Activated CD4-positive, alpha-beta memory T cell treated with anti-CD3 and anti-CD28 coated beads, Interleukin-2, amount 10 ng/mL, durations not matched to agents 7 days and 5 days (primary cell): ENCODE measurements at regions of chr6 and their contacts with region 1.

Region 1: DNA sequence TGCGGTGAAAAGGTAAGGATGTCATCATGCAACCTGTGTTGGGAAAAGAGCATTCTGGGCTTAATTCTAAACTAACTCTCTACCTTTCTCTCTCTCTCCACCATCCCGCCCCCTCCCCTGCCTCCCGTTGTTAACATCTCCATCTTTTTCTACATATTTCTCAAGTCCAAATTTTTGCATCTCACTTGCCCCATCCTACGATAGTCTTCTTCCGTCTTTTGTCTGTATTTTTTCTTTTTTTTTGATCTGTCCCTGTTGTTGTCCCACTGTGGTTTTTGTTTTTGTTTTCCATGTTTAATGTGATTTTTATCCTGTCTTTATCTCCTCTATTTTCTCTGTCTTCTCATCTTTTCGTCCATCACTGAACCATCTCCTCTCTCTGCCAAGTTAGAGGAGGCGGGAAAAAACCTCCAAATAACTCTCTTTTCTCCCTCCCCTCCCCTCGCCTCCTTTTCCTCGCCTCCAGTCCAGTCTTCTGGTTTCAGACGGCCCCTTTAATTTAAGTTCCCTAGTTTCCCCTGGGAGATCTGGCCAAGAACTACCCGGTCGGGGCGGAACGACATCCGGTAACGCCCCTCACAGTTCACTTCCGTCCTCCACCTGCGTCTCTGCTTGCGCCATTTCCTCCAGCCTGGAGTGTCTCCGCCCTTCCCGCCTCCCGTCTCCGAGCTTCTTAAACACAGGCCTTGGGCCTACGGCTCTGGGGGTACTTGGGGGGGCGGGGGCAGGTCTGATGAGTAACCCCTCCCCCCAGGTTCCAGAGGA is at the start of gene NFKBIL1:
- DNase-seq: peak; percentile 93
- H3K4me3 Mint-ChIP-seq: peak within 1 kb of the TSS; percentile 76
- H3K27ac Mint-ChIP-seq: peak within 1 kb of the TSS; percentile 69
- H3K4me1 Mint-ChIP-seq: peaks cover 62% of the 10 kb centered on the region
- H3K27me3 Mint-ChIP-seq: no peaks in the 10 kb centered on the region
- total RNA-seq, gene NFKBIL1: 22.8 to 23.6 TPM

Region 2: DNA sequence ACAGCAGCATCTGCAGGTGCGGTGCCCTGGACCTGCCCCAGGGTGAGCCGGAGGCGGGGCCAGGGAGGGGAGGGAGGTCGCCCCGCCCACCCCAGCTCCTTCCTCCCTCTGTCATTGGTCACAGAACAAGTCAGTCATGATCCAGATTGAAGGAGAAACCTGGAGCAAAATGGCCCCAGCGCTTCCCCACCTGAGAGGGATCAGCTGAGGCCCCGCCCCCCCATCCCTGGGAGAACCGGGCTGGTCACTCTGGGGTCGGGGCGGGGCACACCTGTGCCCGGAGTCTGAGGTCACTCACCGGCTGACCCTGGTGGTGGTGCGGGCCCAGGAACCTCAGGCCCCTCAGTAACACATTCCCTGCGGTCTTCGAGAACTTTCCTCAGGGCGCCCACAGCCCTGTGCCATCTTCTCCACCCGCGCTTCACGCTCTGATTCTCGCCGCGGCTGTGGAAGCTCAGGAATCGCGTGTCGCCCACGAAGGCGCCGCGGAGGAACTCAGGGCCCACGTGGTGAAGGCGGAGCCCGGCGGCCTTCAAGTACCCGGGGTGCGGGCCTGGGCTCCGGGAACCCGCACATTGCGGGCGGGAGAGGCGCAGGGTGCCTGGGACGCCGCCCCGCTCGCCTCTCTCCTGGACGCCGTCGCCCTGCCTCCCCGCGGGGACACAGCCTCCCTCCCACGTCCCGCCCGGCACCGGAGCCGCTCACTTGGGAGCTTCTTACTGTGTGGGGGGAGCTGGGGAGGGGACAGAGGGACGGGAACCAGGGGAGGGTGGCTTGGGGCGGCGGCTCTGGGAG is 238.9 kb before region 1 on chr6:
- CTCF ChIA-PET with region 1: no interaction called
- POLR2A ChIA-PET with region 1: no interaction called
- DNase-seq: peak; percentile 45
- H3K4me3 Mint-ChIP-seq: peak overlapping the region; percentile 68
- H3K27ac Mint-ChIP-seq: no peak overlapping the region
- H3K4me1 Mint-ChIP-seq: peaks cover 2% of the 10 kb centered on the region
- H3K27me3 Mint-ChIP-seq: peaks cover 29% of the 10 kb centered on the region

Region 3: GRCh38 chr6:31559958-31560696 is 13.0 kb after region 1 on chr6:
- CTCF ChIA-PET with region 1: interaction called, 5 read pairs
- POLR2A ChIA-PET with region 1: interaction called, 20 read pairs
- DNase-seq: peak; percentile 67
- H3K4me3 Mint-ChIP-seq: peak overlapping the region; percentile 66
- H3K27ac Mint-ChIP-seq: peak overlapping the region; percentile 61
- H3K4me1 Mint-ChIP-seq: peaks cover 69% of the 10 kb centered on the region
- H3K27me3 Mint-ChIP-seq: peaks cover 30% of the 10 kb centered on the region

Region 4: DNA sequence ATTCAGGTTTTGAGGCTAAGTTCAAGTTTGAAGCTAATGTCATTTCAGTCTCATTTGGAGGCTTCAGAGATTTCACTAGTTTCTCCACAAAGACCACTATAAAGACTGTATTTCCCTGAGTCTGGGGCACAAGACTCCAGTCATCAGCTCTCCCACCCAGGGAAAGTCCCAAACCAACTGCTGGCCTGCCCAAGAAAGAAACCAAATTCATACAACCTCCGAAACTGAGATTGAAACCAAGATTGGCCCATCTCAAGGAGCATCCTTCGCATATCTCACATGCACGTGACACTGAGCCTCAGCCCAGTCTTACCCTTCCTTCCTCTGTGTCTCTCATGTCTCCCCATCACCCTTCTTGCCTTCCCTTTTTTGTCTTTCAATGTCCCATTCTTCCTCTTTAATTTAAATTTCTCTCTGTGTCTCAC is 21.4 kb after region 1 on chr6:
- CTCF ChIA-PET with region 1: interaction called, 400 read pairs
- POLR2A ChIA-PET with region 1: interaction called, 267 read pairs
- DNase-seq: peak; percentile 79
- H3K4me3 Mint-ChIP-seq: peak overlapping the region; percentile 23
- H3K27ac Mint-ChIP-seq: peak overlapping the region; percentile 66
- H3K4me1 Mint-ChIP-seq: peaks cover 69% of the 10 kb centered on the region
- H3K27me3 Mint-ChIP-seq: peaks cover 41% of the 10 kb centered on the region

Region 5: GRCh38 chr6:31580807-31581433 is 33.8 kb after region 1 on chr6:
- CTCF ChIA-PET with region 1: interaction called, 400 read pairs
- POLR2A ChIA-PET with region 1: interaction called, 267 read pairs
- DNase-seq: peak; percentile 89
- H3K4me3 Mint-ChIP-seq: peak overlapping the region; percentile 91
- H3K27ac Mint-ChIP-seq: peak overlapping the region; percentile 94
- H3K4me1 Mint-ChIP-seq: peaks cover 58% of the 10 kb centered on the region
- H3K27me3 Mint-ChIP-seq: no peaks in the 10 kb centered on the region

Region 6: GRCh38 chr6:31619805-31620585 is 72.9 kb after region 1 on chr6:
- CTCF ChIA-PET with region 1: interaction called, 9 read pairs
- POLR2A ChIA-PET with region 1: interaction called, 12 read pairs
- DNase-seq: peak; percentile 98
- H3K4me3 Mint-ChIP-seq: peak overlapping the region; percentile 81
- H3K27ac Mint-ChIP-seq: peak overlapping the region; percentile 95
- H3K4me1 Mint-ChIP-seq: peaks cover 50% of the 10 kb centered on the region
- H3K27me3 Mint-ChIP-seq: no peaks in the 10 kb centered on the region